Activated CD4-positive, alpha-beta T cell treated with anti-CD3 and anti-CD28 coated beads for 36 hours (primary cell): ENCODE measurements at regions of chr3 and their contacts with region 1.

Region 1: GRCh38 chr3:69948246-69948862 is 51.2 kb upstream of the SAMMSON start:
- DNase-seq: no peak
- ATAC-seq: no peak
- H3K4me3 Mint-ChIP-seq: no peak overlapping the region
- H3K27ac Mint-ChIP-seq: no peak overlapping the region
- H3K4me1 Mint-ChIP-seq: no peaks in the 10 kb centered on the region
- H3K27me3 Mint-ChIP-seq: peaks cover 2% of the 10 kb centered on the region

Region 2: DNA sequence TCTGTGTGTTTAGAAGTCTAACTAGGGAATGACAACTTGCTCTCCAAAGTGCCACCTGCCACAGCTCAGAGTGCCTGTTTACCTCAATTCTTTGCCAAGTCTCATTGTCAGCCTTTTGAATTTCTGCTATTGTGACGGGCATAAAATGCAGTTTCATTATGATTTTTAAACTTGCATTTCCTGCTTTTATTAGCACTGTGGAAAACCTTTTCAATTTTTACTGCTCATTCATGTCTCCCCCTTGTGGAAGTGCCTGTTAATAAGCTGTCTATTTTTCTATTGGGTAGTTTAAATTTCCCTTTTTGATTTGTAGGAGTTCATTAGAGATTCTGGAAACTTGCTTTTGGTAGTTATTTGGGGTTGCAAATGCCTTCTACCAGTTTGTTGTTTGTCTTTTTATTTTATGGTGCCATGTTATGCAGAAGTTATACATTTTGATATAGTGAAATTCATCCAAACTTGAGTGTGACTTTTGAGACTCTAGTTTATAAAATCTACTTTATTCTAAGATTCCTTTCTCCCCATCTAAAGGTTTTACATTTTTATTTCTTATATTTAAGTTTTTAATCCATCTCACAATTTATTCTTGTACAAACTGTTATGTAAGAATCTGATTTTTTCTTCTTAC is 508.6 kb before region 1 on chr3:
- CTCF ChIA-PET with region 1: no interaction called
- POLR2A ChIA-PET with region 1: no interaction called
- intact Hi-C with region 1: loop called in 1 of 2 experiments (anchors 10 kb)
- DNase-seq: no peak
- ATAC-seq: no peak
- H3K4me3 Mint-ChIP-seq: no peak overlapping the region
- H3K27ac Mint-ChIP-seq: no peak overlapping the region
- H3K4me1 Mint-ChIP-seq: peaks cover 34% of the 10 kb centered on the region
- H3K27me3 Mint-ChIP-seq: no peaks in the 10 kb centered on the region

Region 3: DNA sequence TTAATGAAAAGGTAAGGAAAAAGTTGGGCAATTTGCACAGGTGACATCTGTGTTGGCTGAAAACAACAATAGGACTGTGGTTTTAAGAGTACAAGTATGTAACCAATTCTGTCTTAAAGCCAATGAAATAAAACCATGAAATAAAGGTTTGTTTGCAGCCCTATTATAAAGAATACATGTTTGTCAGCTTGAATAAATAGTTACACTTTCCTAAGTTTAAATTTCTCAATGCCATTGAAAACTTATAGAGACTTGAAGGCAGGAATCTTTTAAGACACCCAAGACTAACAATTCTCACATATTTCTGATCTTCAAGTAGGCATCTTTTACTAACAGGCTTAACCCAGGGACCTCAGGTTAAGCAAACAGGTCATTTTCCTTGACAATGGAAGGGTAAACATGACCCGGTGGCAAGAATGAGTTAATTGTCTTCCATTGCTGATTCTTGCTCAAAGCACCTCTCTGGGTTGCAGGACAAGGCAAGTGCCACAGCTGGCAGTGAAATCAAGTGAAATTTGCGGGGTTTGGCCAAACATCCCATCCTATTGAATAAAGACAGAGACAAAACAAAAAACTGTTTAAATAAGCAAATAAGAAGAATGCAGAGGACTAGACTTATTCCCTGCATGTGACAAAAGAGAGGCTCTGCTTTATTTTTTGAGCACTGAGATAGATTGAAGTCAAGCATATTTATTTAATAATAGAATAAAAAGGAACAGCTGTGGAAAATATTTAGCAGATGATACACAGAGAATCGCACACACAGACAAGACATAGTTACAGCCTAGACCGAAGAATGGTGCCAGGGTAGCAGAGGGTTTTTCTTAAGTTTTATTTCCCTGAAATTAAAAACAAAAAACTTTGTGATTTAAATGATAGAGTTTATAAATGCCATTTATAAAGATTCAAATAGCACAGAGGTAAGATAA is 265.2 kb before region 1 on chr3:
- CTCF ChIA-PET with region 1: no interaction called
- POLR2A ChIA-PET with region 1: no interaction called
- intact Hi-C with region 1: loop called in 1 of 2 experiments (anchors 10 kb)
- DNase-seq: no peak
- ATAC-seq: no peak
- H3K4me3 Mint-ChIP-seq: no peak overlapping the region
- H3K27ac Mint-ChIP-seq: no peak overlapping the region
- H3K4me1 Mint-ChIP-seq: no peaks in the 10 kb centered on the region
- H3K27me3 Mint-ChIP-seq: peaks cover 2% of the 10 kb centered on the region